ENCODE measurements at regions of chr3 and their contacts with region 1.

Region 1: DNA sequence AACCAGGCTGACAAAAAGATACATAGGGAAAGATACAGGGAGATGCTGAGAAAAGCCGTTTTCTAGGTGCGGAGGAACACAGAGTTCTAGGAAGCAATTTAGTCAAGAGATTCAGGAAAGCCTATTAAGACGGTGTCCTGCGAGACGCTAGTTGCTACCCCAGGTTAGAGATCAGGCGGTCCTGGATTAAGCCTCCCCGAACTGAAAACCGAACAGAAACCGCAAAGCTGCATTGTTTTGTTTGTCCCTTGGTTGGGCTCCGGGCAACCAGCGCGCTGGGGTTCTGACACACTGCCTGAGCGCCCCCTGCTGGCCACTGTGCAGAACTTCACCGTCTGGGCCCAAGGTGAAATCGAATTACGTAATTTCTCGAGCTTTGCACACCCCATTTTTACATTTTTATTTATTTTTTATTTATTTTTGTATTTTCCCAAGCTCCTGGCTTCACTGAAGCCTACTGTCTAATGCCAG is 37.3 kb upstream of the NDUFB4 start:
- DNase-seq: peak; percentile 97
- ATAC-seq: peak; percentile 58

Region 2: GRCh38 chr3:120245386-120245785 is 313.4 kb before region 1 on chr3:
- intact Hi-C with region 1: loop called (anchors 1 kb)
- DNase-seq: no peak
- ATAC-seq: no peak

Region 3: DNA sequence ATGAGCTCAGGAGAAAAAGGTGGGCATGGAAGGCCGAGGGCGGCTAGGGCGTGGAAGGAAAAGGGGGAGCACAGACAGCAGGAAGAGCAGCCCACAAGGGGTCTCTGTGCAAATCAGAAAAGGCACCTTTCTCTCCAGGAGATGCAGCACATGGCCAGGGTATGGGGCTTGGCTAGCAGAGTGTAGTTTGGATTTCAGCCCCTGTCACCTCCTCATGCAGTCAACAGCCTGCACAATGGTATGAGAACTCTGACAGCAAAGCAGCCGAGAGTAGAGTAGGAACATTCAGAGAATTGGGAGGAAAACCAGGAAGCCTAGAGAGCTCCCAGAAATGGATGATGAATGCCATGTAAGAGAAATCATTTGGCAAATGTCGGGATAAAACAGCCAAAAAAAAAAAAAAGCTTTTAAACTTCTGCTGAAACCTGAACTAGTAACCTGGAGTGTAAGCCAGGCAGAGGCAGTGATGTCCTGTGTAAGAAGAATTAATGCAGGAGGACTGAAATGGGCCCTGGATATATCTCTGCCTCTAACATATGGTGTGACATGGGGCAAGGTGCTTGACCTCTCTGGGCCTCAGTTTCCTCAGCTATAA is 133.7 kb before region 1 on chr3:
- intact Hi-C with region 1: loop called (anchors 1 kb)
- DNase-seq: no peak
- ATAC-seq: peak; percentile 47

Region 4: DNA sequence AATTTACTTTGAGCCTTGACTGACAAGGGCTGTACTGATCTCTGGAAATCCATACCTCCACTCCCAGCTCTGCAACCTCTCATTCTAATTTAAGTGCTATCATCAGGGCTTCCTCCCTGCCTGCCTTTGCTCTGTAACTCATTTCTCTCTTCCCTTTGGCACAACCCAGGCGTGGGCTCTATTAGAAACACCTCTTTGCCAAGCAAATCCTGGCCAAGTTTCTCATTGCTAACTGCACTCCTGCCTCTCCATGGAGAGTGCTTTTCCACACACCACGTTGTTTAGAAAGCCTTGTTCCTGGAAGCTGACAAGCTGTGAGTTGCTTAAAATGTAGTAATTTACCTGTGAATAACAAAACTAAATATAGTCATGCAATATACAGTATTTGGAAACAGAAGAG is 87.9 kb before region 1 on chr3:
- intact Hi-C with region 1: loop called (anchors 2 kb)
- DNase-seq: no peak
- ATAC-seq: peak; percentile 88

Region 5: DNA sequence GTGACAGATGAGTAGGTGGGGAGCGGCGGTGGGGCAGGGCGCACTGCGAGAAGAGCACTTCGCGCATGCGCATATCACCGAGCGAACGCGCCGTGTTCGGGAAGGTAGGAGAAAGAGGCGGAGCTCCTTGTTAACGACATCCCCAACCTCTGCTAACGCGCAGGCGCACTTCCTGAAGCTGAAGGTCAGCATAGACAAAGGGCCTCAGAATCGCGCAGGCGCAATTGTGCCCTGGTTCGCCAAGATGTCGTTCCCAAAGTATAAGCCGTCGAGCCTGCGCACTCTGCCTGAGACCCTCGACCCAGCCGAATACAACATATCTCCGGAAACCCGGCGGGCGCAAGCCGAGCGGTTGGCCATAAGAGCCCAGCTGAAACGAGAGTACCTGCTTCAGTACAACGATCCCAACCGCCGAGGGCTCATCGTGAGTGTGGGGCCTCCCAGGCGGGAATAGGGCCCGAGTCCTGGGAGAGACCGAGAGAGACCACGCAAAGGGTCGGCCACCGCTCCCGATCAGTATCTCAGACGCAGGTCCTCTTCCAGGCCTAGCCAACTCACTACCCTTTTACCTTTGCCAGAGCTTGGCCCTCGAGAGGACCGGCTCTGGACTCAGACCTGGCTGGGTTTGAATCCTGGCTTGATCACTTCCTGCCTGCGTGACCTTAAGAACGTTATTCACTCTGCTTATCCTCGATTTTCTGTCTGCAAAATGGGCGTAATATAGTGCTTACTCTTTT is 37.5 kb after region 1 on chr3 and contains the start of gene NDUFB4:
- intact Hi-C with region 1: loop called (anchors 2 kb)
- DNase-seq: peak; percentile 99
- ATAC-seq: peak; percentile 100
- total RNA-seq, gene NDUFB4: 629 TPM